Activated CD8-positive, alpha-beta T cell treated with anti-CD3 and anti-CD28 coated beads for 36 hours (primary cell): ENCODE measurements at regions of chrX and their contacts with region 1.

Region 1: GRCh38 chrX:47523297-47523696 is 37.7 kb upstream of the ARAF start:
- DNase-seq: peak; percentile 80
- ATAC-seq: peak; percentile 100
- H3K4me3 Mint-ChIP-seq: peak overlapping the region; percentile 64
- H3K27ac Mint-ChIP-seq: no peak overlapping the region
- H3K4me1 Mint-ChIP-seq: no peaks in the 10 kb centered on the region
- H3K27me3 Mint-ChIP-seq: no peaks in the 10 kb centered on the region
- CTCF ChIP-seq: peak; percentile 67

Region 2: DNA sequence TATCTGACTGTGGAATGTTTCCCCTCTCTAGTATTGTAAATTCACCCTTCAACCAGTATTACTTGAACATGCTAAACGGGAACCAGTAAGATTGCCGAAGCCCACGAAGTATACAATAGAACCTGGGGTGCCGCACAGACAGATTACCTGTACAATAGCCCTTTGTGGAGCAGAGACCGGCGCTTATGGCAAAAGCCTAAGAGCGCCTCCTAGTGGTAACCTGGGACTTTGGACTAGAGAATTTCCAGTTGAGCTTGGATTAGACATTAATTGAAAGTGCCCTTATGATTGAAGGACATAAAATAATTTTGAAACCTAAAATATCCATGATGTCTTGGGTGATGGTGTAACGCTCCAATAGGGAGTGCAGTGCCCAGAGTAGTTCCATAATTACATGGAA is 138.8 kb before region 1 on chrX:
- CTCF ChIA-PET with region 1: interaction called, 15 read pairs
- POLR2A ChIA-PET with region 1: no interaction called
- intact Hi-C with region 1: no loop called
- DNase-seq: peak; percentile 78
- ATAC-seq: peak; percentile 48
- H3K4me3 Mint-ChIP-seq: no peak overlapping the region
- H3K27ac Mint-ChIP-seq: no peak overlapping the region
- H3K4me1 Mint-ChIP-seq: peaks cover 17% of the 10 kb centered on the region
- H3K27me3 Mint-ChIP-seq: no peaks in the 10 kb centered on the region
- CTCF ChIP-seq: peak; percentile 74

Region 3: DNA sequence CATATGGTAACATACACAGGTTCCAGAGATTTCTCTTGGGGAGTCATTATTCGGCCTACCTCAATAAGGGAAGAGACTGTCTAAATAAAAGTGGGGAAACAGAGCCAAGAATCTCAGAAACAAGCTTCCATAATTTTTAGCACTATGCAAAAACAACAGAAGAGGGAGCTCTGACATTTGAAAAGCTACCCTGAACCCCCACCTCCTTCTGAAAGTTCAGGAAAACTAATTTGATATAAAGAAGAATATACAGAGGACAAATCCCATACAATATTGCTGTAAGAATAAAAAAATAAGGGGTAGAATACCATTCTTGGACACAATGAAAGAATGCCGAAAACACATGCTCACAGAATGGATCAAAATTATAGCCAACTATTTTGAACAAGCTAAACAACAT is 26.0 kb before region 1 on chrX:
- CTCF ChIA-PET with region 1: interaction called, 14 read pairs
- POLR2A ChIA-PET with region 1: interaction called, 3 read pairs
- intact Hi-C with region 1: no loop called
- DNase-seq: no peak
- ATAC-seq: no peak
- H3K4me3 Mint-ChIP-seq: no peak overlapping the region
- H3K27ac Mint-ChIP-seq: no peak overlapping the region
- H3K4me1 Mint-ChIP-seq: no peaks in the 10 kb centered on the region
- H3K27me3 Mint-ChIP-seq: no peaks in the 10 kb centered on the region
- CTCF ChIP-seq: peak; percentile 39